Breast epithelium (tissue), 4 donors: ENCODE measurements at regions of chr6 and their contacts with region 1.

Region 1: GRCh38 chr6:112311950-112312547 is 35.1 kb upstream of the RFPL4B start:
- DNase-seq: no peak
- H3K4me3 ChIP-seq: no peak overlapping the region
- H3K27ac ChIP-seq: no peak overlapping the region
- H3K4me1 ChIP-seq: no peaks in the 10 kb centered on the region
- H3K27me3 ChIP-seq: no peaks in the 10 kb centered on the region
- CTCF ChIP-seq: peak; percentile 32 to 67 (median 58)
- POLR2A ChIP-seq: no peak

Region 2: DNA sequence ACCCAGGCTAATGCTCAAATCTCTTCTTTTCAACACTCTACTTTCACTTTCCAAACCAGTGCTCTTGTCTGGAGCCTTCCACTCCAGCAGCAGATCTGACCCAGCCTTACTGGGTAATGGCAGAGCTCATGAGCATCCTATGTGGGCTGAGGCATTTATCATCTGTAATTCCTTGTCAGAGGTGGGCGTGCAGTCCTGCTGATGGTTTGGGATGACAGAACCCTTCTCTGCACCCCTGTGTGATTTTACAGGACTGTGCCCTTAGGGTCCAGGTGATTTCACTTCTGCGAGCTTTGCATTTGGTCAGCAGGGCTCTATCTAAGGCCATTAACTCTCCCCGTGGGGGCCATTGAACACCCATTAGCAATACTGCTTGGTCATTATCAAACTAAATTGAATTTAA is 113.0 kb before region 1 on chr6:
- intact Hi-C with region 1: loop called (anchors 10 kb)
- DNase-seq: no peak
- H3K4me3 ChIP-seq: no peak overlapping the region
- H3K27ac ChIP-seq: no peak overlapping the region
- H3K4me1 ChIP-seq: no peaks in the 10 kb centered on the region
- H3K27me3 ChIP-seq: no peaks in the 10 kb centered on the region
- CTCF ChIP-seq: no peak
- POLR2A ChIP-seq: no peak